ENCODE measurements at regions of chr1 and their contacts with region 1.

Region 1: DNA sequence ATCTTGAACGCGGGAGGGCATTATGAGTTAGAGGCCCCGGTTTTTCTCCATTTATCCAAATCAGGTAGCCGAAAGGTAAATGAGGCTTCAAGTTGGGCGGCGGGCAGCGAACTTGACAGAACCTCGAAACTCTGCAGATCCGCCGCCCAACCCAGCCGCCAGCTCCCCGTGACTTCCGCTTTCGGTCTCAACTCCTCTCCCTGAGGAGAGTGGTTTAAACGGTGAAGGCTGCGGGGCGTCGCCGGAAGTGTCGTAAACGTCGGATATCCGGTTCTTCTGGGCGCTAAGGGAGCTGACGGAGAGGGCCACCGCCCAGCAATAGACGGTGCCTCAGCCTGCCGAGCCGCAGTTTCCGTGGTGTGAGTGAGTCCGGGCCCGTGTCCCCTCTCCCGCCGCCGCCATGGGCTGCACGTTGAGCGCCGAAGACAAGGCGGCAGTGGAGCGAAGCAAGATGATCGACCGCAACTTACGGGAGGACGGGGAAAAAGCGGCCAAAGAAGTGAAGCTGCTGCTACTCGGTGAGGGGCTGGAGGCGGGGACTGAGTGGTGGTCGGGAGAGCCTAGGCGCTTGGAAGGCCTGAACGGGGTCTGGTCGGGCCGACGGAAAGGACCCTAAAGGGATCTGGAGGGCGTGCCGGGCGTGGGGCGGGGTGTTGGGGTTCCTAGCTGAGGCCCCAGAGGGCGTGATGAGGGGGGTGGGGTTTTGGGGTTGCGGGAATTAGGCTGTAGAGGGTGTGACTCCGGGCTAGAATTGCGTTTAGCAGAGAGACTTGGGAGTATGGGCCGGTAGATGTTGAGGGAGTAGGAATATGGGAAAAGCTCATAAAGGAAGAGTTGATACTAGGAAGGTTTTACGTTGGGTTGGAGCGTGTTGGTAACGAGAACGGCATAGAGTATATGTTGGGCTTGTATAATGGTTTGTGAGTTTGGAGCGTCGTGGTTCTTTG is at the start of gene GNAI3:
- DNase-seq: peak; percentile 89 to 92
- H3K4me3 ChIP-seq: peak within 1 kb of the TSS; percentile 94
- H3K4me3 Mint-ChIP-seq: peak within 1 kb of the TSS; percentile 97
- H3K27ac Mint-ChIP-seq: peak within 1 kb of the TSS; percentile 99
- H3K4me1 ChIP-seq: peaks cover 12% of the 10 kb centered on the region
- H3K4me1 Mint-ChIP-seq: peaks cover 9% of the 10 kb centered on the region
- H3K27me3 ChIP-seq: no peaks in the 10 kb centered on the region
- H3K27me3 Mint-ChIP-seq: peaks cover 3% of the 10 kb centered on the region
- CTCF ChIP-seq: no peak
- total RNA-seq, gene GNAI3: 6.2 and 6.4 TPM in 2 replicates

Region 2: DNA sequence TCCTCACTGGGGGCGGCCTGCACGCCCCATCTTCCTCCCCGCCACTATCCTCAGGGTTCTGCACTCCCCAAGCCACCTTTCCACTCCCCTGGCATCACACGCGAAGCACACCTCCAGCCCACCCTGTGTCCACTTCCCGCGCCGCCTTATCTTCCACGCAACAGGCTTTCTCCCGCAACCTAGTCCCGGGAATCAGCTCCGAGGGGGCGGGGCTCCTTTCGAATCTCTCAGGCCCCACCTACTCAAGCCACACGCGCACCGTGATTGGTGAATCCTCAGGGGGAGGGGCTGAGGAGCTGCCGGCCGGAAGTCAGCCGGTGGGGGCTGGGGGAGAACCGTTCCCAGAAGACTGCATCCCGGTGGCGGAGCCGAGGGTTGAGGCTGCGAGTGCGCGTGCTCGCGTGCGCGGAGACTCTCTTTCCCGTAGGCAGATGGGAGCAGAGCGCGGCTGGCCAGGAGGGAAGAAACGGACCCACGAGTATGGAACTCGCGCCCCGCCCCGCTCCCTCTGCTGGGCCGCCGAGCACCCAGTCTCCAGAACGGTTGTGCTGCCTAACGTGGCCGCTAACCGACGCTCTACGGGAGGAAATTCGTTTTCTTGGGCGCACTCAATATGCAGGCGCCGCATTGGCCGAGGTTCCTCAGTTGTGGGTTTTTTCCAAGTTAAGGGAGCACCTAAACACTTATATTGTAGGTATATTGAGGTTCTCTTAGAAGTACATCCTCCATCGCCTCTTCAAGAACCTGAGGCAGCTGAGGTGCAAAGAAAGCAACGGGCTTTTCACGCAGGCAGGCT is 265.4 kb before region 1 on chr1 and contains the start of gene PSRC1:
- CTCF ChIA-PET with region 1: no interaction called
- POLR2A ChIA-PET with region 1: interaction called, 13 read pairs
- intact Hi-C with region 1: no loop called
- DNase-seq: peak; percentile 94 to 95
- H3K4me3 ChIP-seq: peak within 1 kb of the TSS; percentile 61
- H3K4me3 Mint-ChIP-seq: peak within 1 kb of the TSS; percentile 93
- H3K27ac Mint-ChIP-seq: peak within 1 kb of the TSS; percentile 84
- H3K4me1 ChIP-seq: peaks cover 5% of the 10 kb centered on the region; the same call in 1 of the 2 replicates
- H3K4me1 Mint-ChIP-seq: no peaks in the 10 kb centered on the region
- H3K27me3 ChIP-seq: no peaks in the 10 kb centered on the region
- H3K27me3 Mint-ChIP-seq: no peaks in the 10 kb centered on the region
- CTCF ChIP-seq: no peak
- total RNA-seq, gene PSRC1: 23.9 and 24.9 TPM in 2 replicates

Region 3: GRCh38 chr1:109476825-109477224 is 71.8 kb before region 1 on chr1:
- CTCF ChIA-PET with region 1: no interaction called
- POLR2A ChIA-PET with region 1: no interaction called
- intact Hi-C with region 1: no loop called
- DNase-seq: no peak
- H3K4me3 ChIP-seq: no peak overlapping the region
- H3K4me3 Mint-ChIP-seq: no peak overlapping the region
- H3K27ac Mint-ChIP-seq: no peak overlapping the region
- H3K4me1 ChIP-seq: no peaks in the 10 kb centered on the region
- H3K4me1 Mint-ChIP-seq: no peaks in the 10 kb centered on the region
- H3K27me3 ChIP-seq: no peaks in the 10 kb centered on the region
- H3K27me3 Mint-ChIP-seq: peaks cover 14% of the 10 kb centered on the region
- CTCF ChIP-seq: no peak

Region 4: GRCh38 chr1:109570417-109570827 is 21.8 kb after region 1 on chr1:
- CTCF ChIA-PET with region 1: interaction called, 13 read pairs
- POLR2A ChIA-PET with region 1: interaction called, 14 read pairs
- intact Hi-C with region 1: no loop called
- DNase-seq: peak in 1 of 2 experiments; percentile 24
- H3K4me3 ChIP-seq: no peak overlapping the region
- H3K4me3 Mint-ChIP-seq: no peak overlapping the region
- H3K27ac Mint-ChIP-seq: no peak overlapping the region
- H3K4me1 ChIP-seq: peaks cover 25% of the 10 kb centered on the region
- H3K4me1 Mint-ChIP-seq: peaks cover 9% of the 10 kb centered on the region
- H3K27me3 ChIP-seq: no peaks in the 10 kb centered on the region
- H3K27me3 Mint-ChIP-seq: no peaks in the 10 kb centered on the region
- CTCF ChIP-seq: no peak

Region 5: GRCh38 chr1:109589177-109589576 is 40.6 kb after region 1 on chr1:
- CTCF ChIA-PET with region 1: no interaction called
- POLR2A ChIA-PET with region 1: interaction called, 5 read pairs
- intact Hi-C with region 1: loop called (anchors 1 kb)
- DNase-seq: peak in 1 of 2 experiments; percentile 6
- H3K4me3 ChIP-seq: no peak overlapping the region
- H3K4me3 Mint-ChIP-seq: no peak overlapping the region
- H3K27ac Mint-ChIP-seq: no peak overlapping the region
- H3K4me1 ChIP-seq: no peaks in the 10 kb centered on the region; the same call in 1 of the 2 replicates
- H3K4me1 Mint-ChIP-seq: peaks cover 10% of the 10 kb centered on the region
- H3K27me3 ChIP-seq: no peaks in the 10 kb centered on the region
- H3K27me3 Mint-ChIP-seq: no peaks in the 10 kb centered on the region
- CTCF ChIP-seq: no peak

Region 6: DNA sequence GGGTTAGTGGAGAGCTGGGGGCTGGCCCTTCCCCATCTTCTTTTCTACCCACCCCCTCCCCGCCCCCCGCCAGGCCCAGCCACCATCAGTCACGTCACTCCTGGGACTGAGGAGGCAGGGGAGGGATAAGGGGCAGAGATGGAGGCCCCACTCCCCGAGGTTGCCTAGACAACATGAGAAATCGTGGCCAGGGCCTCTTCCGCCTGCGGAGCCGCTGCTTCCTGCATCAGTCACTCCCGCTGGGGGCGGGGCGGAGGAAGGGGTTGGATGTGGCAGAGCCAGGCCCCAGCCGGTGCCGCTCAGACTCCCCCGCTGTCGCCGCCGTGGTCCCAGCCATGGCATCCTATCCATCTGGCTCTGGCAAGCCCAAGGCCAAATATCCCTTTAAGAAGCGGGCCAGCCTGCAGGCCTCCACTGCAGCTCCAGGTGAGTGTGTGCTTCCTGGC is 72.3 kb after region 1 on chr1:
- CTCF ChIA-PET with region 1: interaction called, 4 read pairs
- POLR2A ChIA-PET with region 1: interaction called, 10 read pairs
- intact Hi-C with region 1: loop called (anchors 1 kb)
- DNase-seq: peak; percentile 86
- H3K4me3 ChIP-seq: peak overlapping the region; percentile 80
- H3K4me3 Mint-ChIP-seq: peak overlapping the region; percentile 96
- H3K27ac Mint-ChIP-seq: peak overlapping the region; percentile 86
- H3K4me1 ChIP-seq: peaks cover 15% of the 10 kb centered on the region
- H3K4me1 Mint-ChIP-seq: peaks cover 16% of the 10 kb centered on the region
- H3K27me3 ChIP-seq: no peaks in the 10 kb centered on the region
- H3K27me3 Mint-ChIP-seq: no peaks in the 10 kb centered on the region
- CTCF ChIP-seq: no peak

Region 7: GRCh38 chr1:109630081-109630897 is 81.7 kb after region 1 on chr1:
- CTCF ChIA-PET with region 1: interaction called, 36 read pairs
- POLR2A ChIA-PET with region 1: no interaction called
- intact Hi-C with region 1: no loop called
- DNase-seq: peak in 1 of 2 experiments; percentile 30
- H3K4me3 ChIP-seq: no peak overlapping the region
- H3K4me3 Mint-ChIP-seq: no peak overlapping the region
- H3K27ac Mint-ChIP-seq: no peak overlapping the region
- H3K4me1 ChIP-seq: no peaks in the 10 kb centered on the region
- H3K4me1 Mint-ChIP-seq: no peaks in the 10 kb centered on the region
- H3K27me3 ChIP-seq: no peaks in the 10 kb centered on the region
- H3K27me3 Mint-ChIP-seq: no peaks in the 10 kb centered on the region
- CTCF ChIP-seq: peak in 1 of 2 experiments; percentile 33

Region 8: DNA sequence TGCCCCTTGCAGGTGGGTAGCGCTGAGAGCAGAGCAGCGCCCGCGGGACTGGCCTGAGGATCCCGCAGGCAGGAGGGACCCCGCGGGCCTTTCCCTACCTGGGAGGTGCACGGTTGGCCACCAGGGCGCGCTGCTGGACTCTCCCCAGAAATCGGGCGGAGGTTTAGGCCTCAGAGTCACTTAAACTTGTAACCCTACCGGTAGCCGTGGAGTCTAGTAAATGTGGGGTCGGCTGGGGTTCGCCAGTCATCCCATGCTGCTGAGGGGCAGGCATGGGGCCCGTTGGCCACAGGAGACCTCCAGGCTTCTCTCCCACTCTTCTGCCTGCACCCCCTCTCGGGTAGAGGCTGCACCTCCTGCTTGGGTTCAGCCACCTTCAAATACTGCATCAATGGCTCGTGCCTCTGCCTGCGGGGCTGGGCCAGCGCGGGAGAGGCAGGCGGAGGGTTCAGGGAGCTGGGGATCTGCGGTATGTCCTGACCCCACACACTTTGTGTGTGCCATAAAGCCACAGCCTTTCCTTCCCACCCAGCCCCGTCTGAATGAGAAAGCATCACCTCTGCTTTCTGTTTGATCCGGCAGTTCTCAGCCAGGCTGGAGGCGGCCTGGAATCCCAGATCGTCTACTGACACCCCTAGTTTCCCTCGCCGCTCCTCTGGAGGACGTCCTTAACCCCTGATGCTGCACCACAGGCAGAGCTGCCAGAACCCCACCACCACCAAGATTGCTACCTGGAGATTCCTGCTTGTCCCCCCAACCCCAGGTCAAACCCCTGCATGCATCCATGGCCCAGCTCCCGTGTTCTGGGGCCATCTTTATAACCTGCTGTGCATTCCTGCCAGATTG is 95.0 kb after region 1 on chr1:
- CTCF ChIA-PET with region 1: interaction called, 26 read pairs
- POLR2A ChIA-PET with region 1: interaction called, 7 read pairs
- intact Hi-C with region 1: loop called (anchors 5 kb)
- DNase-seq: peak; percentile 76 to 81
- H3K4me3 ChIP-seq: no peak overlapping the region
- H3K4me3 Mint-ChIP-seq: no peak overlapping the region
- H3K27ac Mint-ChIP-seq: no peak overlapping the region
- H3K4me1 ChIP-seq: no peaks in the 10 kb centered on the region
- H3K4me1 Mint-ChIP-seq: no peaks in the 10 kb centered on the region
- H3K27me3 ChIP-seq: no peaks in the 10 kb centered on the region
- H3K27me3 Mint-ChIP-seq: no peaks in the 10 kb centered on the region
- CTCF ChIP-seq: peak; percentile 63 to 72

Measured in Caco-2 (cell line).